Heart right ventricle (tissue), 16 donors: ENCODE measurements at regions of chr10 and their contacts with region 1.

Region 1: DNA sequence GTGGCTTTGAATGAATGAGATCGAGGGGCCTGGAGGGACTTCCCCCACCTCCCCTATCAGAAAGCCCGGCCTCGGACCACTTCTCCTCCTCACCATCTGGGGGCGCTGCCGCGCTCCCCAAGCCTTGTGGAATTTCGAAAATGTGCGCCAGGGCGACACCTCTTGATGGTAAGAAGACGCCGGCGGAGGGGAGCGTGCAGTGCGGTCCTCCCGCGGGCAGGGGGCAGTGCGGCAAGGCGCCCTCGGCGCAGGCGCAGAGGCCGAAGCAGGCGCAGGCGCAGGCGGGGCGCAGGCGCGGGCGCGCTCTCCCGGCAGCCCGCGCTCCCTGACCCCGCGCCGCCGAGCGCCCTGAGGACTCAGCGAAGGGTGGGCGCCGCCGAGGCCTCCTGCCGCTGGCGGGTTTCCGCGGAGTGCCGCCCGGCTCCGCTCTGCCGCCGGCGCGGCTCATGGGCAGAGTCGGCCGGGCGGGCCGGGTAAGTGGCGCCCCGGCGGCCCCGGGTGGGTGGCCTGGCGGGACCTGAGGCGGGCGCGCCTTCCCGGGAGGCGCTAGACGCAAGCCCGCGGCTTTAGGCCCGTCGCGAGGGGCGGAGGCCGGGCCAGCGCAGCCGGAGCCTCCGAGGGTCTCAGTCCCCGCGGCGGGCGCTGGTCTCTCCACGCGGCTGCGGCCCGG is at the start of gene RBM17:
- DNase-seq: peak; percentile 95 to 96
- ATAC-seq: peak; percentile 85 to 97 (median 92)
- H3K4me3 ChIP-seq: peak within 1 kb of the TSS; percentile 67 to 95 (median 88)
- H3K27ac ChIP-seq: peak within 1 kb of the TSS; percentile 81 to 97 (median 94)
- H3K4me1 ChIP-seq: peaks cover 8 to 70% (median 59%) of the 10 kb centered on the region in 9 donors
- H3K27me3 ChIP-seq: peaks cover 0 to 3% (median 0%) of the 10 kb centered on the region in 7 donors
- CTCF ChIP-seq: peak; percentile 99 to 100 (median 100)
- total RNA-seq, gene RBM17: 53.4 to 93.2 (median 64.0) TPM

Region 2: DNA sequence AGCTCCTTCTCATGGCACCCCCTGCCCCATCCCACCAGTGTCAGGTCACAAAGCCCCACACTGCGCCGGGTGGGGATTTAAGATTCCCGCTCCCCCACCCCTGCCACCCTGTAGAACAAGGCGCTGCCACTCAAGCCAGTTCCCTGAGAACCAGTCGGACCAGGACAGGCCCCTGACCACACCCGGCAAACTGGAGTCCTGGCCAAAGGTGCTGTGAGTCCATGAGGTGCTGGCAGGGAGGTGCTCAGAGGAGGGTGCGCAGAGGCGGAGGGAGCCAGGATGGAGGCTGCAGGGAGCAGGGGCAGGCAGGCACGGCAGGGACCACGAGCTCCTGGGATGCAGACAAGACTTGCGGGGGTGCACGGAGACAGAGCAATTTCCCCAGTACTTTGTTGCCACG is 255.9 kb before region 1 on chr10:
- intact Hi-C with region 1: no loop called
- DNase-seq: no peak
- ATAC-seq: no peak
- H3K4me3 ChIP-seq: no peak overlapping the region
- H3K27ac ChIP-seq: no peak overlapping the region
- H3K4me1 ChIP-seq: peaks cover 0 to 9% (median 3%) of the 10 kb centered on the region in 9 donors
- H3K27me3 ChIP-seq: no peaks in the 10 kb centered on the region
- CTCF ChIP-seq: no peak

Region 3: GRCh38 chr10:5971315-5971832 is 117.5 kb before region 1 on chr10:
- intact Hi-C with region 1: loop called in 1 of 10 experiments (anchors 5 kb)
- DNase-seq: peak in 1 of 2 donors; percentile 47
- ATAC-seq: peak in 7 of 8 donors; percentile 60 to 87 (median 82)
- H3K4me3 ChIP-seq: no peak overlapping the region
- H3K27ac ChIP-seq: peak overlapping the region; percentile 18 to 81 (median 72)
- H3K4me1 ChIP-seq: peaks cover 0 to 64% (median 27%) of the 10 kb centered on the region in 9 donors
- H3K27me3 ChIP-seq: no peaks in the 10 kb centered on the region
- CTCF ChIP-seq: no peak

Region 4: DNA sequence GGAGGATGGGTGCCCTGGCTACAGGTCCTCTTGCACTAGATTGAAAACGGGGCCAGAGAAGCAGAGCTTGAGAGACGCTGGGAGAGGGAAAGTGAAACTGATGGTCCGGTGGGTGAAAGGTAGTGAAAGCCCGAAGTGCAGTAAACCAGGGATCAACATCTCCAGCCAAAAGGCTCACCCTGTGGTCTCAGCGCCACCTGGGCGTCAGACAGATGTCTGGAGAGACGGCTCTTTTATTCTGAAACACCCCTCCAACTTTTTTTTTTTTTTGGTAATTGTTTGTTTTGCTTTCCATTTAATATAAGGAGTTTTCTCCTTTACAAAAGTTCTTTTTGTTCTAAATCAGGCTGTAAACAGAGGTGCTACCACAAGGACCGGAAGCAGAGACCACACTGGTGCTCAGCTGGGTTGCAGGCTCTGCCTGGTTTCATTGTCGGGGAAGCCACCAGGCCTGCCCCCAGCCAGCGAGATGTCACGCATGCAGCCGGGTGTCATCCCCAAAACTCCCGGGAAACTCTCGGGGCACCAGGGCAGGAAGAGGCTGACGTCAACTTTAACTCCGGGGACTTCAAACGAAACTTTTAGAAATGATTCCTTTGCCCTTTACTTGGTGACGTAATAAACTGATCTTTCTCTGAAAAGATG is 37.9 kb before region 1 on chr10:
- intact Hi-C with region 1: loop called in 2 of 10 experiments (anchors 2 kb)
- DNase-seq: peak; percentile 55 to 69
- ATAC-seq: peak in 7 of 8 donors; percentile 68 to 75 (median 71)
- H3K4me3 ChIP-seq: peak overlapping the region in 9 of 10 donors; percentile 5 to 59 (median 39)
- H3K27ac ChIP-seq: peak overlapping the region; percentile 37 to 89 (median 76)
- H3K4me1 ChIP-seq: peaks cover 0 to 52% (median 37%) of the 10 kb centered on the region in 9 donors
- H3K27me3 ChIP-seq: no peaks in the 10 kb centered on the region
- CTCF ChIP-seq: peak; percentile 10 to 64 (median 37)

Region 5: DNA sequence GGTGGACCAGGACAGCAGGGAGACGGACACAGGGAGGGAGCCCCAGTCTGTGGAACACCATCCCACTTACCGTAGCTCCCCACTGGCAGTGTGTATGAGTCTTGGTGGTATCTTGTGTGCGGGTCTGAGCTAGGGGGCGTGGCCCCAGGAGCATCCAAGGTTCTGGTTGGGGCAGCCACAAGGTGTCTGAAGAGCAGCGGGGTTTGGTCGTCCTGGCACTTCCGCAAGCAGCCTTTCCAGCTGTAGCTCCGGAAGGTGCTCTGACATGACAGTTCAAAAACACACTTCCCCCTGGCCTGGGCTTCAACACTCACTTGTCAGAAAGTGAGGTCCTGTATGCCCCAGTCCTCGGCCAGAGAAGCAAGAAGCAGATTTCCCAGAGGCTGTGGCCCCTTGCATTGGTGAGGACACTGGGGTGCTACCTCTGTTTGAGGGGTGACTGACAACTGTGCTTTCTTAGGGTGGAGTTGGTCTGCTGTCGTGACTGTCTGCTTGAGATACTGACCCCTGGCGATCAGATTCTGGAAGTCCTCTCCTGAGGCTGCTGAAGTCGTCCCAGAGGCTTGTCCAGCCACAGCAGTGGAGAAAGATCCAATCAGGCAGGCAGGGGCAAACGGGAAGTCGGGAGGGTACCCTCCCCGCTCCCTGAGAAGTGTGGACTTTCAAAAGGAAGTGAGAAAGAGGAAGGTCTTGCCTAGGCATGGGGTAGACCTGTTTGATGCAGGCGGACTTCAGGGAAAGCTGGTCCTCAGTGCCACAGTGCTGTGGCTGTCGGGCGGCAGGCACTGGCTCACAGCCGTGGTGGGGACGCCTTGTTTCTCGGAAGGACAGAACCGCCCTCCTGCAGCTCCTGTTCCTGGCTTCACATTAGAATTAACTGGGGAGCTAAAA is 62.5 kb after region 1 on chr10:
- intact Hi-C with region 1: loop called in 1 of 10 experiments (anchors 10 kb)
- DNase-seq: peak; percentile 42 to 70
- ATAC-seq: peak; percentile 51 to 85 (median 80)
- H3K4me3 ChIP-seq: peak overlapping the region in 4 of 10 donors; percentile 5 to 29 (median 12)
- H3K27ac ChIP-seq: peak overlapping the region in 7 of 10 donors; percentile 20 to 88 (median 42)
- H3K4me1 ChIP-seq: peaks cover 0 to 57% (median 10%) of the 10 kb centered on the region in 9 donors
- H3K27me3 ChIP-seq: no peaks in the 10 kb centered on the region
- CTCF ChIP-seq: peak; percentile 22 to 78 (median 64)

Region 6: DNA sequence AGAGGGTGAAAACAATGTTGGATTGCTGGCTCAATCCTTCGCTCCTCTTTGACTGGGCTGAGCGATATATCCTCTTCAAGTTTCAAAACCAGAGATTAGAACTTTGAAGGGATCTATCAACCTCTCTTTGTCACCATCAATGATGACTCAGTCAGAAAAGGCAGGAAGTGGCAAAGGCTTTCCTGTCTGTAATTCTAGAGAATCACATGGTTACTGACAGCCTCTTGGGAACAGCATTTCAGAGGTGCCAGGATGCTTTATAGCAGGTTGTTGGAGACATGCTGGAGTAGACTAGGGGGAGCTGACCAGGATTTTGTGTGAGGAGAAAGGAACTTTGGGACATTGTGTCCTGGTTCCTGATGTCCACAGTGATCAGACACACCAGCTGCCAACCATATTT is 409.9 kb after region 1 on chr10:
- intact Hi-C with region 1: no loop called
- DNase-seq: no peak
- ATAC-seq: peak in 1 of 8 donors; percentile 25
- H3K4me3 ChIP-seq: no peak overlapping the region
- H3K27ac ChIP-seq: no peak overlapping the region
- H3K4me1 ChIP-seq: peaks cover 0 to 29% (median 0%) of the 10 kb centered on the region in 9 donors
- H3K27me3 ChIP-seq: peaks cover 0 to 31% (median 16%) of the 10 kb centered on the region in 7 donors
- CTCF ChIP-seq: no peak